Naive thymus-derived CD4-positive, alpha-beta T cell (primary cell): ENCODE measurements at regions of chr6 and their contacts with region 1.

Region 1: DNA sequence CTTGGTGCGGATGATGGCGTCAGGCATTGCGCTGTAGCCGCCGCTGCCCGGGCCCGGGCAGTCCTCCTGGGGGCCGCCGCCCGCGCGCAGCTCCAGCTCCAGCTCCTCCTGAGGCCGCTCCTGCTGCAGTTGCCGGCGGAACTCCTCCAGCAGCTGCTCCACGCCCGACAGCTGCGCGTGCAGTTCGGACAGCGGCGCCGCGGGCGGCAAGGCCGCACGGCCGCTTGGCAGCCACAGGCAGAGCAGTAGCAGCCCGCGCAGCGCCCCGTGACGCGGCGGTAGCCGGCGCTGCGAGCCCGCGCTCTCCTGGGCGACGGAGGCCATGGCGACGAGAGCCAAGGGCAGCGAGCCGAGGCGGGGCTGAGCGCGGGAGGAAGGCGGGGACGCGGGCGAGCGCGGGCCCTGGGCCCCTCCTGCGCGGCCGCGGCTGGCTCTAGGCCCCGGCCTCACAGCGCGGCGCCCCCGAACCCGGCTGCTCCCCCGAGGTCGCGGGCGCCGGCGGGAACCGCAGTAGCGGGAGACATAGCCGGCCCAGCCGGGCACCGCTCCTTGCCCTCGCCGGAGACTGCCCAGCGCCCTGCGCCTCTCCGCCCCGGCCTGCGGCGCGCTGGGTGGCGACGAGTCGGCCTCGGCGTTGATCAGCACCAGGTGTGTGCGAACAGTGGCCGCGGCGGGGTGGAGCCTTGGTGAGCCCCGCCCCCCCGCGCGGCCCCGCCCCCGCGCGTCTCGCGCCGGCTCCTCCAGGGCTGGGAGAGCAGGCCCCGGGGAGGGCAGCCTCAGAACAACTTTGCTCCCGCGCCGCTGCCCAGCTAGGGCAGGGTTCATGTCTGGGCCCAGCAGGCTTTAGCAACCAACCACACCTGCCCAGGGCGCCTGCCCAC is at the start of gene LRP11:
- DNase-seq: peak; percentile 73 to 90 (median 83)
- ATAC-seq: peak; percentile 93
- H3K4me3 ChIP-seq: peak within 1 kb of the TSS; percentile 63
- H3K4me3 Mint-ChIP-seq: peak within 1 kb of the TSS; percentile 80 to 88 (median 82)
- H3K27ac ChIP-seq: peak within 1 kb of the TSS; percentile 62
- H3K27ac Mint-ChIP-seq: peak within 1 kb of the TSS in 6 of 9 donors; percentile 24 to 82 (median 48)
- H3K4me1 ChIP-seq: peaks cover 6 to 10% of the 10 kb centered on the region in 2 donors
- H3K4me1 Mint-ChIP-seq: peaks cover 0 to 21% (median 10%) of the 10 kb centered on the region in 7 donors
- H3K27me3 ChIP-seq: no peaks in the 10 kb centered on the region
- H3K27me3 Mint-ChIP-seq: peaks cover 0 to 41% (median 8%) of the 10 kb centered on the region in 5 donors
- total RNA-seq, gene LRP11: 0.88 to 3.7 (median 2.8) TPM

Region 2: GRCh38 chr6:149565527-149566409 is 298.2 kb before region 1 on chr6 and contains the start of gene GINM1:
- CTCF ChIA-PET with region 1: interaction called, 4 read pairs
- POLR2A ChIA-PET with region 1: no interaction called
- intact Hi-C with region 1: loop called (anchors 1 kb)
- DNase-seq: peak; percentile 92 to 99 (median 96)
- ATAC-seq: peak; percentile 94
- H3K4me3 ChIP-seq: peak within 1 kb of the TSS; percentile 89
- H3K4me3 Mint-ChIP-seq: peak within 1 kb of the TSS; percentile 93 to 99 (median 97)
- H3K27ac ChIP-seq: peak within 1 kb of the TSS; percentile 95
- H3K27ac Mint-ChIP-seq: peak within 1 kb of the TSS; percentile 87 to 97 (median 97)
- H3K4me1 ChIP-seq: peaks cover 0 to 6% of the 10 kb centered on the region in 2 donors
- H3K4me1 Mint-ChIP-seq: peaks cover 3 to 39% (median 19%) of the 10 kb centered on the region in 7 donors
- H3K27me3 ChIP-seq: no peaks in the 10 kb centered on the region
- H3K27me3 Mint-ChIP-seq: peaks cover 0 to 7% (median 0%) of the 10 kb centered on the region in 5 donors
- total RNA-seq, gene GINM1: 14.4 to 27.3 (median 19.9) TPM

Region 3: DNA sequence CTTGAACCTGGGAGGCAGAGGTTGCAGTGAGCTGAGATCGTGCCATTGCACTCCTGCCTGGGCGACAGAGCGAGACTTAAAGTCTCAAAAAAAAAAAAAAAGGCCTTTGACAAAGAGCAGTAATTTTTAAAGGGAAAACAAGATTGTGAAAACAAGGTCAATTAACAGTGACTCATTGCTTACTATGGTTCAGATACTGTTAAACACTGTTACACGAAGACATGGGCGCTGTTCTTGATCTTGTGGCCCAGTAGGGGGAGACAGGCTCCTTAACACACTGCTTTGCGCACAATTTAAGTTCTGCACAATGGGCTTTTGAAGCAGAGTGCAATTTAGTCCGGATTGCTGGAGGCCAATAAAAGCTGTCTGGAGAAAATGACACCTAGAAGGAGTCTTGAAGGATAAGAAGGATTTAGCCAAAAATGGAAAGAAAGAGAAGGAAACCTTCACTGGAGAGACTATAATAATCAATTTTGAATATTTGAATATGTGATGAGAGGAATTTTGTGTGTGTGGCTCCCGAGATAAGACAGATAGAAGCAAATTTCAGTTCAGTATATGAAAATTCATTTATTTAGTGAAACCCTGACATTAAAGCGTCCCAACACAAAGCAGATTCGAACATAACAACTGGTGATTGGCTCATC is 140.0 kb before region 1 on chr6:
- CTCF ChIA-PET with region 1: no interaction called
- POLR2A ChIA-PET with region 1: no interaction called
- intact Hi-C with region 1: loop called in 1 of 2 experiments (anchors 1 kb)
- DNase-seq: peak in 7 of 9 donors; percentile 29 to 50 (median 43)
- ATAC-seq: peak; percentile 93
- H3K4me3 ChIP-seq: no peak overlapping the region
- H3K4me3 Mint-ChIP-seq: no peak overlapping the region
- H3K27ac ChIP-seq: no peak overlapping the region
- H3K27ac Mint-ChIP-seq: peak overlapping the region in 4 of 9 donors; percentile 10 to 78 (median 34)
- H3K4me1 ChIP-seq: peaks cover 3 to 13% of the 10 kb centered on the region in 2 donors
- H3K4me1 Mint-ChIP-seq: peaks cover 16 to 30% (median 24%) of the 10 kb centered on the region in 7 donors
- H3K27me3 ChIP-seq: no peaks in the 10 kb centered on the region
- H3K27me3 Mint-ChIP-seq: no peaks in the 10 kb centered on the region

Region 4: GRCh38 chr6:149840345-149841075 is 23.4 kb before region 1 on chr6:
- CTCF ChIA-PET with region 1: interaction called, 11 read pairs
- POLR2A ChIA-PET with region 1: no interaction called
- intact Hi-C with region 1: loop called (anchors 1 kb)
- DNase-seq: peak in 4 of 9 donors; percentile 7 to 47 (median 10)
- ATAC-seq: no peak
- H3K4me3 ChIP-seq: no peak overlapping the region
- H3K4me3 Mint-ChIP-seq: no peak overlapping the region
- H3K27ac ChIP-seq: no peak overlapping the region
- H3K27ac Mint-ChIP-seq: no peak overlapping the region
- H3K4me1 ChIP-seq: no peaks in the 10 kb centered on the region
- H3K4me1 Mint-ChIP-seq: no peaks in the 10 kb centered on the region
- H3K27me3 ChIP-seq: peaks cover 0 to 3% of the 10 kb centered on the region in 2 donors
- H3K27me3 Mint-ChIP-seq: peaks cover 0 to 25% (median 4%) of the 10 kb centered on the region in 5 donors

Region 5: GRCh38 chr6:150004783-150005717 is 141.1 kb after region 1 on chr6:
- CTCF ChIA-PET with region 1: no interaction called
- POLR2A ChIA-PET with region 1: no interaction called
- intact Hi-C with region 1: loop called (anchors 1 to 5 kb)
- DNase-seq: peak; percentile 73 to 91 (median 82)
- ATAC-seq: peak; percentile 89
- H3K4me3 ChIP-seq: peak overlapping the region; percentile 87
- H3K4me3 Mint-ChIP-seq: peak overlapping the region; percentile 78 to 96 (median 91)
- H3K27ac ChIP-seq: peak overlapping the region; percentile 75
- H3K27ac Mint-ChIP-seq: peak overlapping the region; percentile 31 to 95 (median 85)
- H3K4me1 ChIP-seq: peaks cover 13 to 31% of the 10 kb centered on the region in 2 donors
- H3K4me1 Mint-ChIP-seq: peaks cover 7 to 56% (median 20%) of the 10 kb centered on the region in 7 donors
- H3K27me3 ChIP-seq: peaks cover 0 to 3% of the 10 kb centered on the region in 2 donors
- H3K27me3 Mint-ChIP-seq: peaks cover 15 to 35% (median 19%) of the 10 kb centered on the region in 5 donors

Region 6: GRCh38 chr6:151451950-151452749 is 1588.2 kb after region 1 on chr6 and contains the start of gene RMND1:
- CTCF ChIA-PET with region 1: no interaction called
- POLR2A ChIA-PET with region 1: no interaction called
- intact Hi-C with region 1: loop called in 1 of 2 experiments (anchors 2 kb)
- DNase-seq: peak; percentile 92 to 99 (median 99)
- ATAC-seq: peak; percentile 98
- H3K4me3 ChIP-seq: peak within 1 kb of the TSS; percentile 90
- H3K4me3 Mint-ChIP-seq: peak within 1 kb of the TSS; percentile 90 to 98 (median 96)
- H3K27ac ChIP-seq: peak within 1 kb of the TSS; percentile 86
- H3K27ac Mint-ChIP-seq: peak within 1 kb of the TSS; percentile 83 to 98 (median 92)
- H3K4me1 ChIP-seq: peaks cover 15 to 20% of the 10 kb centered on the region in 2 donors
- H3K4me1 Mint-ChIP-seq: peaks cover 36 to 68% (median 54%) of the 10 kb centered on the region in 7 donors
- H3K27me3 ChIP-seq: no peaks in the 10 kb centered on the region
- H3K27me3 Mint-ChIP-seq: peaks cover 0 to 5% (median 0%) of the 10 kb centered on the region in 5 donors
- total RNA-seq, gene RMND1: 8.8 to 21.5 (median 18.7) TPM